ENCODE measurements at regions of chr5 and their contacts with region 1.

Region 1: GRCh38 chr5:111603446-111603827 is 91.1 kb upstream of the STARD4 start:
- DNase-seq: peak; percentile 56
- H3K4me3 ChIP-seq: no peak overlapping the region
- H3K27ac ChIP-seq: no peak overlapping the region
- H3K4me1 ChIP-seq: no peaks in the 10 kb centered on the region
- H3K27me3 ChIP-seq: no peaks in the 10 kb centered on the region
- CTCF ChIP-seq: no peak
- POLR2A ChIP-seq: no peak

Region 2: DNA sequence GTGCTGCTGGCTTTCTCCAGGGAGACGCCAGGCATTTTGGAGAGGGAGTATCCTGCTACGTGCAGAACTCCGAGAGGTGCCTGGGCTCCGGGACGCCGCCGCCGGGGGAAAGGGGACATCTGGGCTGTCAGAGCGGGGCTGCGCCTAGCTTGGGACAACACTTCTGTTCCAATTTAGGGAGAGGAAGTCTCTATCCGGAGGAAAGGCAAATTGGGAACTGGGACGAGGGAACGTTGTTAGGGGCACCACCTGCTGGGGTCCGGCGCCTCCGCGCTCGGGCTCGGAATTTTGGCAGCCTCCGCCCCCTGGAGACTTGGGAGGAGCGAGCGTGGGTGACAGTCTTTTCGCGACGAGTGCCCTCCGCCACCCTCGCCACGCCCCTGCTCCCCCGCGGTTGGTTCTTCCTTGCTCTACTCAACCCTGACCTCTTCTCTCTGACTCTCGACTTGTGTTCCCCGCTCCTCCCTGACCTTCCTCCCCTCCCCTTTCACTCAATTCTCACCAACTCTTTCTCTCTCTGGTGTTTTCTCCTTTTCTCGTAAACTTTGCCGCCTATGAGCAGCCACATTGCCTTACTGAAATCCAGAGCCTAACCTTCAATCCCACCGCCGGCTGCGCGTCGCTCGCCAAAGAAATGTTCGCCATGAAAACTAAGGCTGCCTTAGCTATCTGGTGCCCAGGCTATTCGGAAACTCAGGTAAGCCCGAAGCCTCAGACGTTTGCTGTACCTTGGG is 530.3 kb before region 1 on chr5:
- CTCF ChIA-PET with region 1: no interaction called
- POLR2A ChIA-PET with region 1: no interaction called
- dilution Hi-C with region 1: no loop called
- intact Hi-C with region 1: no loop called
- DNase-seq: no peak
- H3K4me3 ChIP-seq: peak overlapping the region in 2 of 3 experiments; percentile 32 to 40
- H3K27ac ChIP-seq: no peak overlapping the region
- H3K4me1 ChIP-seq: peaks cover 3% of the 10 kb centered on the region
- H3K27me3 ChIP-seq: peaks cover 53 to 72% of the 10 kb centered on the region in 2 experiments
- CTCF ChIP-seq: no peak
- POLR2A ChIP-seq: no peak

Region 3: DNA sequence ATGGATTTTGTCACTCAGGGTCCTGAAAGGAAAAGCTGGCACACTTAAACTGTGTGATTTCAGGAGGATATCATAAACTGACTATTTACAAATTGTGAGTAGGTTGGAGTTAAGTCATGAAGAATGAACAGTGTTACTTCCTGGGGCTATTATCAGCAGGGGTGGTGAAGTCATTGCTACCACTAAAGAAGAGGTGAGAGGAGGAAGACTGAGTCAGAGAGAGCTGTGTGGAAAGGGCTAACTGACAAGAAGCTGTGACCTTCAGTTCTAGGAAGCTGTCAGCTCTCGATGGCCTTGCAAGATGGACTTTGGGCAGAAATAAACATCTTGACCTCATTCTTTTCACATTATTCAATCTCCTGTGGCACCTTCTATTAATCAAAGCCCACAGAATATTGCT is 18.8 kb before region 1 on chr5:
- CTCF ChIA-PET with region 1: no interaction called
- POLR2A ChIA-PET with region 1: no interaction called
- dilution Hi-C with region 1: no loop called
- intact Hi-C with region 1: loop called (anchors 2 kb)
- DNase-seq: peak; percentile 90
- H3K4me3 ChIP-seq: no peak overlapping the region
- H3K27ac ChIP-seq: peak overlapping the region; percentile 66
- H3K4me1 ChIP-seq: peaks cover 29% of the 10 kb centered on the region
- H3K27me3 ChIP-seq: no peaks in the 10 kb centered on the region
- CTCF ChIP-seq: no peak
- POLR2A ChIP-seq: no peak

Measured in endothelial cell of umbilical vein (primary cell).